Activated CD8-positive, alpha-beta memory T cell treated with anti-CD3 and anti-CD28 coated beads, Interleukin-2, amount 10 ng/mL, durations not matched to agents 7 days and 5 days (primary cell): ENCODE measurements at regions of chr1 and their contacts with region 1.

Region 1: GRCh38 chr1:154878371-154879022 is 8.4 kb upstream of the KCNN3 start:
- DNase-seq: peak; percentile 79
- ATAC-seq: peak; percentile 97
- H3K4me3 Mint-ChIP-seq: no peak overlapping the region
- H3K27ac Mint-ChIP-seq: no peak overlapping the region
- H3K4me1 Mint-ChIP-seq: peaks cover 4% of the 10 kb centered on the region
- H3K27me3 Mint-ChIP-seq: peaks cover 35% of the 10 kb centered on the region

Region 2: DNA sequence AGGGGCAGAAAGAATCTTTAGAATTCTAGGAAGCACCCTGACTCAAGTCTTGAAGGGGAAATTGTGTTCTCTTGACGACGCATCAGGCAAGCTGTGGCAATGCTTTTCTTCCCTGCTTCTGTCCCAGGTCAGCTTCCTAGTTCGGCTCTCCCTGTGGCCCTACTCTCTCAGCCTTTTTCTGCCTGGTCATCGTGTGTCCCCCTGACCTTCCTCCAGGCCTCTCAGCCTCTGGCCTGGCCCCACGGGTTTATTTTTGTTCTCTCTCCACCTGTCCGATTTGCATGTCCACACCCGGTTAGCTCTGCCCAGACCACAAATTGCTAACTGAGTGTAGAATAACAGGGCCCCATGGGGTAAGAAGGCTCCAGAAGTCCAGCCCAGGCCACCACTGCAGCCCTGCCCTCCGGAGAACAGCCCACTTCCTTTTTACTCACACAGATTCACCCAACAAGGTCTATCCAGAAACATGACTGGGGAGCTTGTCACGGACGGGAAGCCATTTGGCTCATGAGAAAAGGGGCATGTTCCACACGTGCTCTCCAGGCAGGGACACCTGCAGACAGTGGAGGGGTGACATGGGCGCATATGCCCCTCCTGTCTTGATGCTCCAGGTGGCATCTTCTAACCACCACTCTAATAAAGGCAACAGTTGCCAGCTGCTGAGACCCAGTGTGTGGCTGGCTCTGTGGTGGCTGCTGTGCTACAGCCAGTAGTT is 18.2 kb before region 1 on chr1:
- CTCF ChIA-PET with region 1: interaction called, 13 read pairs
- DNase-seq: no peak
- ATAC-seq: no peak
- H3K4me3 Mint-ChIP-seq: no peak overlapping the region
- H3K27ac Mint-ChIP-seq: no peak overlapping the region
- H3K4me1 Mint-ChIP-seq: peaks cover 31% of the 10 kb centered on the region
- H3K27me3 Mint-ChIP-seq: peaks cover 29% of the 10 kb centered on the region

Region 3: GRCh38 chr1:154891452-154891851 is 13.0 kb after region 1 on chr1:
- CTCF ChIA-PET with region 1: interaction called, 12 read pairs
- DNase-seq: no peak
- ATAC-seq: no peak
- H3K4me3 Mint-ChIP-seq: no peak overlapping the region
- H3K27ac Mint-ChIP-seq: no peak overlapping the region
- H3K4me1 Mint-ChIP-seq: peaks cover 8% of the 10 kb centered on the region
- H3K27me3 Mint-ChIP-seq: peaks cover 9% of the 10 kb centered on the region

Region 4: GRCh38 chr1:154943649-154944400 is 65.3 kb after region 1 on chr1:
- CTCF ChIA-PET with region 1: interaction called, 14 read pairs
- DNase-seq: peak; percentile 59
- ATAC-seq: no peak
- H3K4me3 Mint-ChIP-seq: no peak overlapping the region
- H3K27ac Mint-ChIP-seq: peak overlapping the region; percentile 97
- H3K4me1 Mint-ChIP-seq: peaks cover 54% of the 10 kb centered on the region
- H3K27me3 Mint-ChIP-seq: no peaks in the 10 kb centered on the region